ENCODE measurements at regions of chr15 and their contacts with region 1.

Region 1: GRCh38 chr15:66287461-66288057 is 5.8 kb upstream of the DIS3L start:
- DNase-seq: peak; percentile 55
- ATAC-seq: no peak
- H3K4me3 ChIP-seq: no peak overlapping the region
- H3K27ac ChIP-seq: no peak overlapping the region
- H3K4me1 ChIP-seq: peaks cover 3% of the 10 kb centered on the region; the same call in 1 of the 2 replicates
- H3K27me3 ChIP-seq: no peaks in the 10 kb centered on the region
- CTCF ChIP-seq: peak; percentile 60

Region 2: DNA sequence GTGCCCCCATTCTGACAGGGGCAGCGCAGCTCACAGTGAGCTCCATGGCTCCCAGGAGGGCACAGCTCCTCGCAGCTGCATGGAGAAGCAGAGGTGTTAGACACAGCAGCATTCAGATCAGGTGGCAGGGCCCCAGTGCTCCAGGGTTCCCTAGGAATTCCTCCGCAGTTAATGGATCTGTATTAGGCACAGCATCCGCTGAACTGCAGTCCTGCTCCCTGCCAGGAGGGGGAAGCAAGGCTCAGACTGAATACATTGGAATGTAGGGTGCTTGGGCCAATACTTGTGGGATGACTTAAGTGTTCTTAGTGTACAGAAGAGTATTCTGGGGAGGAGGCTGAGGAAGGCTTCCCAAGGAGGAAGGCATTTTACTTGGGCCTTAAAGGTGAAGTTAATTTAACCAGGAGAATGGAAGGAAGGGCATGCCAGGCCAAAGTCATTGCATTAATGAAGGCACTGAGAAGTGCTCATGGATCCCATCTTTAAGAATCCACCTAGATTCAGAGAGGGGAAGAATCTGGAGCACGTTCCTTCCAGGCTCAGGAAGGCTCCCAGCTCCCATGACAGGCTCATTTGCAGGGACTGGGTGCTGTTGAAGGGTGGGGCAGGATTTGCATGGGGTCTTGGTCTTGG is 306.6 kb before region 1 on chr15:
- CTCF ChIA-PET with region 1: no interaction called
- POLR2A ChIA-PET with region 1: no interaction called
- intact Hi-C with region 1: loop called (anchors 5 kb)
- DNase-seq: peak; percentile 67
- ATAC-seq: peak; percentile 81
- H3K4me3 ChIP-seq: no peak overlapping the region
- H3K27ac ChIP-seq: no peak overlapping the region
- H3K4me1 ChIP-seq: no peaks in the 10 kb centered on the region
- H3K27me3 ChIP-seq: peaks cover 24% of the 10 kb centered on the region
- CTCF ChIP-seq: peak; percentile 78

Region 3: GRCh38 chr15:66251790-66252684 is 35.5 kb before region 1 on chr15:
- CTCF ChIA-PET with region 1: no interaction called
- POLR2A ChIA-PET with region 1: no interaction called
- intact Hi-C with region 1: loop called (anchors 1 kb)
- DNase-seq: peak; percentile 53
- ATAC-seq: peak; percentile 75
- H3K4me3 ChIP-seq: peak overlapping the region; percentile 73
- H3K27ac ChIP-seq: no peak overlapping the region
- H3K4me1 ChIP-seq: no peaks in the 10 kb centered on the region
- H3K27me3 ChIP-seq: peaks cover 20% of the 10 kb centered on the region; the same call in 1 of the 2 replicates
- CTCF ChIP-seq: peak; percentile 66

Region 4: GRCh38 chr15:66306381-66306780 is 18.8 kb after region 1 on chr15:
- CTCF ChIA-PET with region 1: no interaction called
- POLR2A ChIA-PET with region 1: no interaction called
- intact Hi-C with region 1: no loop called
- DNase-seq: no peak
- ATAC-seq: no peak
- H3K4me3 ChIP-seq: no peak overlapping the region
- H3K27ac ChIP-seq: no peak overlapping the region
- H3K4me1 ChIP-seq: no peaks in the 10 kb centered on the region
- H3K27me3 ChIP-seq: no peaks in the 10 kb centered on the region
- CTCF ChIP-seq: no peak